ENCODE measurements at regions of chr10 and their contacts with region 1.

Region 1: GRCh38 chr10:101012525-101013364 is 13.1 kb downstream of the LZTS2 start:
- DNase-seq: peak; percentile 96
- ATAC-seq: peak; percentile 86
- H3K4me3 ChIP-seq: peak overlapping the region in 1 of 2 experiments; percentile 13; a peak in 1 of 4 replicates
- H3K27ac ChIP-seq: peak overlapping the region; percentile 39
- H3K4me1 ChIP-seq: peaks cover 31 to 69% of the 10 kb centered on the region in 2 experiments
- H3K27me3 ChIP-seq: no peaks in the 10 kb centered on the region
- CTCF ChIP-seq: peak in 2 of 3 experiments; percentile 88 to 99; a peak in 4 of 6 replicates
- POLR2A ChIP-seq: no peak
- RAD21 ChIP-seq: no peak

Region 2: DNA sequence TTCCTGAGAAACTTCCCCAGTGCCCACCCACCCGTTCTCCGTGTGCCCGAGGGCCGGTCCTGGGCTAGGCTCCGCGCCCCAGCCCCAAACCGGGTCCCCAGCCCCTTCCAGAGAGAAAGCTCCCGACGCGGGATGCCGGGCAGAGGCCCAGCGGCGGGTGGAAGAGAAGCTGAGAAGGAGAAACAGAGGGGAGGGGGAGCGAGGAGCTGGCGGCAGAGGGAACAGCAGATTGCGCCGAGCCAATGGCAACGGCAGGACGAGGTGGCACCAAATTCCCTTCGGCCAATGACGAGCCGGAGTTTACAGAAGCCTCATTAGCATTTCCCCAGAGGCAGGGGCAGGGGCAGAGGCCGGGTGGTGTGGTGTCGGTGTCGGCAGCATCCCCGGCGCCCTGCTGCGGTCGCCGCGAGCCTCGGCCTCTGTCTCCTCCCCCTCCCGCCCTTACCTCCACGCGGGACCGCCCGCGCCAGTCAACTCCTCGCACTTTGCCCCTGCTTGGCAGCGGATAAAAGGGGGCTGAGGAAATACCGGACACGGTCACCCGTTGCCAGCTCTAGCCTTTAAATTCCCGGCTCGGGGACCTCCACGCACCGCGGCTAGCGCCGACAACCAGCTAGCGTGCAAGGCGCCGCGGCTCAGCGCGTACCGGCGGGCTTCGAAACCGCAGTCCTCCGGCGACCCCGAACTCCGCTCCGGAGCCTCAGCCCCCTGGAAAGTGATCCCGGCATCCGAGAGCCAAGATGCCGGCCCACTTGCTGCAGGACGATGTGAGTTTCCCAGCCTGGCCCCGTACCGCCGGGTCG is 665.8 kb before region 1 on chr10 and contains the start of gene SCD:
- CTCF ChIA-PET with region 1: no interaction called
- POLR2A ChIA-PET with region 1: no interaction called
- RAD21 ChIA-PET with region 1: no interaction called
- intact Hi-C with region 1: loop called (anchors 10 kb)
- DNase-seq: peak; percentile 89
- ATAC-seq: peak; percentile 88
- H3K4me3 ChIP-seq: peak within 1 kb of the TSS; percentile 92
- H3K27ac ChIP-seq: peak within 1 kb of the TSS; percentile 96
- H3K4me1 ChIP-seq: peaks cover 44 to 54% of the 10 kb centered on the region in 2 experiments
- H3K27me3 ChIP-seq: no peaks in the 10 kb centered on the region
- CTCF ChIP-seq: no peak
- POLR2A ChIP-seq: peak; percentile 74
- RAD21 ChIP-seq: no peak
- total RNA-seq, gene SCD: 652 TPM

Region 3: DNA sequence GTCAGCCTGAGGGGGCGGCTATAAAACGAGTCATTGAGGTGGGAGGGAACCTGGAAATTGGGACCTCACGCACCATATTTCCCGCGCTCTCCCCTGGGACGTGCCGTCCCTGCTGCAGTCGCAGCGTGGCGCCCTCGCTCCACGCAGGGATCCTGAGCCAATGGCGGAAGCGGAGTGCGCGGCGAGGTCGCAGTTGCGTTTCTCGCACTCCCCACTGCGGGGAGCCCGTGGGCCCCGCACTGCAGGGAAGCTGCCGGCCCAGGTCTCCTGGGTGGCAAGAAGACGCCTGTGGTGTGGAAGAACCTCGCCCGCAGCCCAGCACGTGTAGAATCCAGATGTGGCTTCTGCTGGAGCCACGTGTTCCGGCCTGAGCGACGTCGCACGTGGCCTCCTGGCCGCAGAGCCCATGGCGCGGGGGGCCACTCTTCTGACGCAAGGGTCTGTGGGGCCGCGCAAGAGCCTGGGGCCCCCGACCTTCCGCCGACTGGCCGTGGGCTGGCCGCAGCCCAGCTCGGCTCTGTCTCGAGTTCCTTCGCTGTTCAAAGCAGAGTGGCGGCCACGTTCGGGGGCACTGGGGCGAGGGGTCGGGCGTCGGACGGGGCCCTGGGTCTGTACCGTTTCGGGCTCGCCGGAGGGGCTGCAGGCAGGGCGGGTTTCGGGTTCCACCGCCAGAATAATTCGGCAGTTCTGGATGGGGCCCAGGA is 450.6 kb before region 1 on chr10:
- CTCF ChIA-PET with region 1: interaction called, 8 read pairs
- POLR2A ChIA-PET with region 1: no interaction called
- RAD21 ChIA-PET with region 1: no interaction called
- intact Hi-C with region 1: loop called (anchors 1 kb)
- DNase-seq: peak; percentile 74
- ATAC-seq: peak; percentile 95
- H3K4me3 ChIP-seq: no peak overlapping the region
- H3K27ac ChIP-seq: no peak overlapping the region
- H3K4me1 ChIP-seq: peaks cover 0 to 10% of the 10 kb centered on the region in 2 experiments; a peak in 2 of 4 replicates
- H3K27me3 ChIP-seq: no peaks in the 10 kb centered on the region
- CTCF ChIP-seq: peak; percentile 99 to 100 (median 100)
- POLR2A ChIP-seq: no peak
- RAD21 ChIP-seq: peak; percentile 100

Region 4: DNA sequence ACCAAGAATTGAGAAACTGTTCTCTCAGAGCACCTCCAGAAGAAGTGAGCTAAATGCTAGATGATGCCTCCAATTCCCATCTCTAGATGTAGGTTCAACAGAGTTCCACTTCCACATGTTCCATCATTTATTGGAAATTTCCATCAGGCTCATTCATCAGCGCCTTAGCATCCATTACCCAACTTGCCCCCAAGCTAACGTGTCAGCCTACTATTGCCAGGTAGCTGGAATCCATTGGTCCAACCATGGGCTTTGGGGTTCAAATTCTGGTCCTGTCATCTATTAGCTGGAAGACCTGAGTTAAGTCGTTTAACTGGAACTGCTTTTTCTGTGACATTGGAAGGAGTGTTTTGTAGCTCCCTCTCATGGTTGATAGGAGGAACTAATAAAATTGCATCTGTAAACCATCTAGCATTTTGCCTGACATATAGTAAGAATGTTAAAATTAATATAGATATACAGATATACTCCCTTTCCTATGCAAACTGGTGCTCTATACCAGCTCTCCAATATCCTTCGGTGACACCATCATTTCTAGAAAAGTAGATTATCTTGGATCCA is 123.9 kb before region 1 on chr10:
- CTCF ChIA-PET with region 1: interaction called, 12 read pairs
- POLR2A ChIA-PET with region 1: no interaction called
- RAD21 ChIA-PET with region 1: no interaction called
- intact Hi-C with region 1: no loop called
- DNase-seq: peak; percentile 34
- ATAC-seq: no peak; the same call in 1 of the 2 replicates
- H3K4me3 ChIP-seq: no peak overlapping the region
- H3K27ac ChIP-seq: no peak overlapping the region
- H3K4me1 ChIP-seq: peaks cover 24 to 43% of the 10 kb centered on the region in 2 experiments
- H3K27me3 ChIP-seq: no peaks in the 10 kb centered on the region
- CTCF ChIP-seq: peak; percentile 53 to 70 (median 64); a peak in 5 of 6 replicates
- POLR2A ChIP-seq: no peak
- RAD21 ChIP-seq: peak; percentile 60

Region 5: DNA sequence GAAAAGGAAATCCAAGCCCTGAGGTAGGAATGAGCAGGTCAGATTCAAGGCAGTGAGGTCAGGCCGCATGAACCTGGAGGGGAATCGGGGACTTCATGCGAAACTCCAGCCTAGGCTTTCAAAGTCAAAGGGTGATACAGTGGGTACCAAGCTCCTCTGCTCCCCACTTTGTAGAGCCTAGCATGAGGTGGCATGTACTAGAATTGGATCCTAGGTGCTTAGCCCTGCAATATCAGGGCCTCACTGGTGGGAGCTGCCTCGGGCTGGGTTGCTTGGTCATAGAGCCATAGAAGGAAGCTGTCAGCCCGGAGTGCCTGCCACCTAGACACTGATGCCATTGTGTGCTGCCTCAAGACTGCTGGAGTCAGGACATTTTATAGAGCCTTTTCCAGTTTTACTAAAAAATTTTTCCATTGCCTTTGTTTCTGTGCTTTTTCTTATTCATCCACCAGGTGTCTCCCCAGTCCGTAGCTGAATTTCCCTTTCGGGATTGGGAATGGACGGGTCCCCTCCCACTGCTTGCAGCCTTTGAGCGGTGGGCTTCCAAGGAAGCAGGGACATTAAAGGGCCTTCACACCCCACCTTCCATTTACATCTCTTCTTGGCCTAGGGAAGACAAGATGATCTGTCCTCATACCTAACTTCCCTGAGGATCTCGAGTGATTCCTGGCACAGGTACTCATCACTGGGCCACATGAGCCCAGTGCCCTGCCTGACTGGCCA is 18.6 kb before region 1 on chr10:
- CTCF ChIA-PET with region 1: interaction called, 118 read pairs
- POLR2A ChIA-PET with region 1: interaction called, 9 read pairs
- RAD21 ChIA-PET with region 1: interaction called, 5 to 10 read pairs
- intact Hi-C with region 1: loop called (anchors 1 kb)
- DNase-seq: no peak
- ATAC-seq: no peak
- H3K4me3 ChIP-seq: no peak overlapping the region
- H3K27ac ChIP-seq: peak overlapping the region; percentile 87
- H3K4me1 ChIP-seq: peaks cover 10 to 51% of the 10 kb centered on the region in 2 experiments
- H3K27me3 ChIP-seq: no peaks in the 10 kb centered on the region
- CTCF ChIP-seq: peak in 2 of 3 experiments; percentile 75 to 90; a peak in 4 of 6 replicates
- POLR2A ChIP-seq: no peak
- RAD21 ChIP-seq: no peak

Region 6: DNA sequence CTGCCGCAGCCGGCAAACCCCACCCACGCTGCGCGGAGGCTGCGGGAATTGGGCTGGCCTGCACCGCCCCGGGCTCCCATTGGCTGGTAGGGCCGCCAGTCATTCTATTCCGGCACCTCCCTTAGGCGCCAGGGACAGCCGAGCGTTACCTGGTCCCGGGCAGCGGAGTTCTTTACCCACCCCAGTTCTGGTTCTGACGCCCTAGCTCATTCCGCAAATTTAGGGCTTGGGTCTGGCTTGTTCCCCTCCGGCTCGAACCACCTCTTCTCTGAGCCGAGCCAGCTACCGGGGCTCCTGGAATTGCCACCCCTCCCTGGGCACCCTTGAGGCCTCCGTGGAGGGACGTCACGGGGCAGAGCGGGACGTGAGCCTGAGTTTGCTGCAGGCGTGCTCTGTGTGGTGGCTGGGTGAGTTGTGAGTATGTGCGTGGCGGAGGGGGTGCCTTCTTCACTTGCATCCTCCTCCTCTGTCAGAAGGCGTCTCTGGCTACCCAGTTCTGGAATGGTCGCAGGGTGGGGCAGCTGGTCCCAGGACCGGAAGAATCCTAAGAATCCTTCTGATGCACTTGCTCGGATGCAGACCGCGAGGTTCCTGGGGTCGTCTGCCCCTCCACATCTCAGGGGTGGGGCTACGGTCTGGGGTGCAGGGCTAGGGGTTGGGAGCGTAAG is 18.5 kb after region 1 on chr10 and contains the starts of genes PDZD7 and SFXN3:
- CTCF ChIA-PET with region 1: interaction called, 51 read pairs
- POLR2A ChIA-PET with region 1: interaction called, 4 read pairs
- RAD21 ChIA-PET with region 1: interaction called in 1 of 2 experiments, 5 read pairs
- intact Hi-C with region 1: no loop called
- DNase-seq: peak; percentile 94
- ATAC-seq: peak; percentile 87
- H3K4me3 ChIP-seq: peak within 1 kb of the TSS; percentile 67 to 87
- H3K27ac ChIP-seq: peak within 1 kb of the TSS; percentile 81
- H3K4me1 ChIP-seq: peaks cover 32 to 56% of the 10 kb centered on the region in 2 experiments
- H3K27me3 ChIP-seq: no peaks in the 10 kb centered on the region
- CTCF ChIP-seq: no peak
- POLR2A ChIP-seq: no peak
- RAD21 ChIP-seq: no peak
- total RNA-seq, gene PDZD7: 6.1 TPM
- total RNA-seq, gene SFXN3: 52.5 TPM

Measured in HCT116 (cell line).